ENCODE measurements at regions of chr3 and their contacts with region 1.

Region 1: DNA sequence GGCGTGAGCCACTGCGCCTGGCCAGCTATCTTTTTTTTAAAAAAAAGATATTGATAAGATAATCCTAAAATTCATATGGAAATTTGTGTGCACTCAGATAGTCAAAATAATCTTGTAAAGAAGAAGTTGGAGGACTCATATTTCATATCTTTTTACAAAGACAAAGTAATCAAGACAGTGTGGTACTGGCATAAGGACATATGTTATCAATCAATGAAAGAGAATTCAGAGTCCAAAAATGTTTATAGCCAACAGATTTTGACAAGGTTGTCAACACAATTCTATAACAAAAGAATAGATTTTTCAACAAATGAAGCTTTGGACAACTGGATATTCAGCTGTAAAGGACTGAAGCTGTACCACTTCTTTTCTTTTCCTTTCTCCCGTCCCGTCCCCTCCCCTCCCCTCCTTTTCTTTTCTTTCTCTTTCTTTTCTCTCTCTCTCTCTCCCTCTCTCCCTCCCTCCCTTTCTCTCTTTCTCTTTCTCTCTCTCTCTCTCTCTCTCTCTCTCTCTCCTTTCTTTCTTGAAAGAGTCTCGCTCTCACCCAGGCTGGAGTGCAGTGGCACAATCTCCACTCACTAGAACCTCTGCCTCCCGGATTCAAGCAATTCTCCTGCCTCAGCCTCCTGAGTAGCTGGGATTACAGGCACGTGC is 126.8 kb downstream of the GSK3B start:
- DNase-seq: no peak
- H3K4me3 ChIP-seq: no peak overlapping the region
- H3K27ac ChIP-seq: no peak overlapping the region
- H3K4me1 ChIP-seq: peaks cover under 1% of the 10 kb centered on the region; the same call in 1 of the 2 replicates
- H3K27me3 ChIP-seq: no peaks in the 10 kb centered on the region
- CTCF ChIP-seq: no peak

Region 2: DNA sequence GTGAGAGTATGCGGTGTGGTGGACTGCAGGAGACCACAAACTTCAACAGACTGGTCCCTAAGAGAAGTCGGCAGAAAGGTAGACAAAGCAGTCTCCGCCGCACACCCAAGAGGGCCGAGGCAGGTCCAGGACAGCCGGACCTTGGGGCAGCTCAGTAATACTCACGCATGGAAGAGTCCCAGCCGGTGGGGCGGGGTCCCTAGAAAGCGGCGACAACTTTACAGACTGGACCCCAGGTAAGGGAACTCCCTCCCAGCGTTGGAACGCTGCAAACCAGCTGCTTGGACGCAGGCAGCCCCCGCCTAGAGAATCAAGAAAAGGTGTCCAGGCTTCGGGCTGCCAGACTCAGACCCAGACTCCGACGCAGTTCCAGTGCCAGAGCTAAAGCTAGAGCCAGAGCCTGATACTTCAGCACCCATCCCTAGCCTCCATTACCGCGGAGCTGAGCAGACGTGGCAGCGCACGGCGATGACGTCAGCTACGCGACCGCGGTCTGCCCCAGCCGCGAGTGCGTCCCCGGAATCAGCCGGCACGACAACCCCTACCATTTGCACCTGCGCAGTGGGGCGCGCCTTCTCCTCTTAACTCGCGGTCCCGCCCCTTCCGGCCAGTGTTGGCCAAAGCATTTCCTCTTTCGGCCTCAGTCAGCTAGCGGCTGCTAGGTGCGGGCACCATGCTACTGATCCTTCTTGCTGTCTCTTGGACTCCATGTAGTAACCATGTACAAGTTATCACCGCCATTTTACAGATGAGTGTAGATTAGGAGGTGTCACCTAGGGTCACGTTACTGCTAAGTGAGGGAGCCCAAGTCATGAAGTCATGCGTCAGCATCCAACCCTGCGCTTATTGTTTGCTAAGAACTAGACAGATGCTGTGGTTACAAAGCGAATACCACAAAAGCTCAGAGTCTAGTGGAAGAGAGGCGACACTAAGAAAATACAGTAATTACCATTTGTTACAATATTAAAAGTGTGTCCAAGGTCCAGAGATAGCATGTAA is 504.0 kb before region 1 on chr3 and contains the start of gene TMEM39A:
- CTCF ChIA-PET with region 1: no interaction called
- POLR2A ChIA-PET with region 1: no interaction called
- intact Hi-C with region 1: no loop called
- DNase-seq: peak; percentile 92 to 99
- H3K4me3 ChIP-seq: peak within 1 kb of the TSS; percentile 87
- H3K27ac ChIP-seq: peak within 1 kb of the TSS; percentile 56
- H3K4me1 ChIP-seq: peaks cover 17% of the 10 kb centered on the region
- H3K27me3 ChIP-seq: no peaks in the 10 kb centered on the region
- CTCF ChIP-seq: peak; percentile 40; the same call in 1 of the 2 replicates
- total RNA-seq, gene TMEM39A: 46.8 and 51.7 TPM in 2 replicates

Region 3: DNA sequence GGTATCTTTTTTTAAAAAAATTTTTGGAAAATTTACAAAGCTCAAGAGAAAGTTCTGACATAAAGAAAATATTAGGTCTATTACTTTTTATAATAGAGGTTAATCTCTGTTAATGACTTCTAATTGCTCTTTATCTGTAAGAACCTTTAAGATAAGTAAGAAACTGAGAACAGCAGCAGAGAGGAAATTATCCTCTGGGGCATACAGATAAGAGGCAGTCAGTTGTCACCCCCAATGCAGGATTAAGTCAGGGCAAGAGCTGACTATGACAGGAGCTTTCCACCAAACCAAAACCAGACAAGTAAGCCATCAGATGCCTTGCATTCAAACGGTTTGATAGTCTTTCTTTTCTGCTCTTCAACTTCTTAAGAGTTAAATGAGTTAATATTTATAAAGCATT is 22.2 kb before region 1 on chr3:
- CTCF ChIA-PET with region 1: interaction called, 14 read pairs
- POLR2A ChIA-PET with region 1: no interaction called
- intact Hi-C with region 1: no loop called
- DNase-seq: no peak
- H3K4me3 ChIP-seq: no peak overlapping the region
- H3K27ac ChIP-seq: no peak overlapping the region
- H3K4me1 ChIP-seq: no peaks in the 10 kb centered on the region
- H3K27me3 ChIP-seq: no peaks in the 10 kb centered on the region
- CTCF ChIP-seq: no peak

Region 4: DNA sequence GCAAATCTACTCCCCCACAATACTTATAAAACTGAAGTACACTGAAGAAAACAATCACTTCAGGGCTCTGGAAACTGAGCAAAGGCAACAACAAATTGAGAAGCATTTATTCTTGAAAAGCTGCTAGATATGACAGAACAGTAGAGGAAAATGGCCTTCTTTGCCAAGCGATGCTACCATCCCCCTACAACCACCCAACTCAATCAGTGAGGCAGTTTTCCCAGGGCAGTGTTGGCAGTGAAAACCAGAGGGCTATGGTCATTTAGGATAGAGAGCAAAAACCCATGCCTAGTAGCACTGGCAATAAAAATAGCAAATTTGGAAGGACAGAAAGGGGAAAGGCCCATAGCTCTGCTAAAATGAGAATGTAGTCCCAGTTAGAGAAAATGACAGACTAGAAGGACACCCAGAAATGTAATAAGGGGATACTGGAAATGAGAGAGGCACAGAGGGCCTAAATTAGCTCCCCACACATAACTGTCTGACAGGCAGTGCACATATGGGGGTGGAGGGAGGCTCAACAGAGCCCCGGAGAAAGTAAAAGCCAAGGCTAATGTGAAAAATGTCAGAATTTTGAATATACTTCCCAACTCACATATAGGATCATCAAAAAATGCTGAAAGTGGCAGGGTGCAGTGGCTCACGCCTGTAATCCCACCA is 16.7 kb before region 1 on chr3:
- CTCF ChIA-PET with region 1: interaction called, 14 read pairs
- POLR2A ChIA-PET with region 1: no interaction called
- intact Hi-C with region 1: loop called (anchors 1 kb)
- DNase-seq: no peak
- H3K4me3 ChIP-seq: no peak overlapping the region
- H3K27ac ChIP-seq: no peak overlapping the region
- H3K4me1 ChIP-seq: no peaks in the 10 kb centered on the region
- H3K27me3 ChIP-seq: no peaks in the 10 kb centered on the region
- CTCF ChIP-seq: no peak

Region 5: GRCh38 chr3:120033596-120033995 is 66.1 kb after region 1 on chr3:
- CTCF ChIA-PET with region 1: no interaction called
- POLR2A ChIA-PET with region 1: no interaction called
- intact Hi-C with region 1: no loop called
- DNase-seq: no peak
- H3K4me3 ChIP-seq: no peak overlapping the region
- H3K27ac ChIP-seq: no peak overlapping the region
- H3K4me1 ChIP-seq: no peaks in the 10 kb centered on the region
- H3K27me3 ChIP-seq: no peaks in the 10 kb centered on the region
- CTCF ChIP-seq: no peak